CD4-positive, alpha-beta T cell (primary cell): ENCODE measurements at regions of chr7 and their contacts with region 1.

Region 1: GRCh38 chr7:100563809-100564400 is 9.8 kb downstream of the SAP25 start:
- DNase-seq: peak; percentile 75 to 92 (median 84)
- ATAC-seq: peak; percentile 76
- H3K4me3 ChIP-seq: no peak overlapping the region
- H3K4me3 Mint-ChIP-seq: no peak overlapping the region
- H3K27ac ChIP-seq: no peak overlapping the region
- H3K27ac Mint-ChIP-seq: no peak overlapping the region
- H3K4me1 ChIP-seq: peaks cover 35% of the 10 kb centered on the region
- H3K4me1 Mint-ChIP-seq: peaks cover 34% of the 10 kb centered on the region
- H3K27me3 ChIP-seq: no peaks in the 10 kb centered on the region
- H3K27me3 Mint-ChIP-seq: no peaks in the 10 kb centered on the region
- CTCF ChIP-seq: peak; percentile 92

Region 2: DNA sequence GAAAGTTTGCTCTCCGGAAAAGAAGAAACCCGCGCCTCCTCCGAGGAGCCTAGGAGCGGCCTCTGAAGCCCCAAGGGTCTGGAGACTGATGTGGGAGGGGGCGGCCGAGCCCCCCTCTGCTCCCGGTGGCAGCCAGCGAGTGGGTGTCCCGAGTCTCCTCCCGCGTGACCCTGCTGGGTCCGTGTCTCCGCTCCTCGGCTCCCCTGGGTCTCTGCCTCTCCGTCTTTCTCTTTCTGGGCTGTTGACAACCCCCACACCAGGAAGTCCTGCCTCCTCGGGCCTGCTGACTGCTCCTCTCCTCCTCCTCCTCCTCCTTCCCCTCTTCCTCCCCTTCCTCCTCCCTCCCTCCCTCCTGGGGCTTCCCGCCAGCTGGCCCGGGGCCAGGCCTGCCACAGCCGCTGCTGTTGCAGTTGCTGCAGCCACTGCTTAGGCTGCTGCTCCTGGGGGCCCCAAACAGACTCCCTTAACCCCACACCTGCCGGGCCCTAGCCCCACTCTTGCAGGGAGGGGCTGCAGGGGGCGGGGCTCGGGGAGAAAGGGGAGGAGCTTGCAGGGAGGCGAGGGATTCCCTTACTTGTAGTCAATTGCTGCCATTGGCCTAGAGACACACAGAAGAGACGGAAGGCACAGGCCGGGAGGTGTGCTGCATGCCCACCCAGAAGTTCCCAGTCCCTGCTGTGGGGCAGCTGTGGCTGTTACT is 84.8 kb before region 1 on chr7 and contains the start of gene TSC22D4:
- CTCF ChIA-PET with region 1: interaction called, 14 read pairs
- POLR2A ChIA-PET with region 1: interaction called, 8 read pairs
- intact Hi-C with region 1: loop called in 1 of 2 experiments (anchors 1 kb)
- DNase-seq: peak; percentile 85 to 97 (median 93)
- ATAC-seq: peak; percentile 75
- H3K4me3 ChIP-seq: peak within 1 kb of the TSS; percentile 100
- H3K4me3 Mint-ChIP-seq: peak within 1 kb of the TSS; percentile 97
- H3K27ac ChIP-seq: peak within 1 kb of the TSS; percentile 73 to 84
- H3K27ac Mint-ChIP-seq: peak within 1 kb of the TSS; percentile 83
- H3K4me1 ChIP-seq: peaks cover 70% of the 10 kb centered on the region
- H3K4me1 Mint-ChIP-seq: peaks cover 49% of the 10 kb centered on the region
- H3K27me3 ChIP-seq: no peaks in the 10 kb centered on the region
- H3K27me3 Mint-ChIP-seq: no peaks in the 10 kb centered on the region
- CTCF ChIP-seq: no peak
- total RNA-seq, gene TSC22D4: 34.6 to 36.5 TPM

Region 3: GRCh38 chr7:100538654-100539435 is 25.1 kb before region 1 on chr7 and contains the start of gene AGFG2:
- CTCF ChIA-PET with region 1: interaction called, 48 read pairs
- POLR2A ChIA-PET with region 1: interaction called, 8 read pairs
- intact Hi-C with region 1: loop called (anchors 2 kb)
- DNase-seq: peak; percentile 100
- ATAC-seq: peak; percentile 94
- H3K4me3 ChIP-seq: peak within 1 kb of the TSS; percentile 73
- H3K4me3 Mint-ChIP-seq: peak within 1 kb of the TSS; percentile 99
- H3K27ac ChIP-seq: peak within 1 kb of the TSS in 1 of 2 donors; percentile 41
- H3K27ac Mint-ChIP-seq: peak within 1 kb of the TSS; percentile 77
- H3K4me1 ChIP-seq: peaks cover 44% of the 10 kb centered on the region
- H3K4me1 Mint-ChIP-seq: peaks cover 48% of the 10 kb centered on the region
- H3K27me3 ChIP-seq: no peaks in the 10 kb centered on the region
- H3K27me3 Mint-ChIP-seq: no peaks in the 10 kb centered on the region
- CTCF ChIP-seq: no peak
- total RNA-seq, gene AGFG2: 6.6 to 9.9 TPM

Region 4: DNA sequence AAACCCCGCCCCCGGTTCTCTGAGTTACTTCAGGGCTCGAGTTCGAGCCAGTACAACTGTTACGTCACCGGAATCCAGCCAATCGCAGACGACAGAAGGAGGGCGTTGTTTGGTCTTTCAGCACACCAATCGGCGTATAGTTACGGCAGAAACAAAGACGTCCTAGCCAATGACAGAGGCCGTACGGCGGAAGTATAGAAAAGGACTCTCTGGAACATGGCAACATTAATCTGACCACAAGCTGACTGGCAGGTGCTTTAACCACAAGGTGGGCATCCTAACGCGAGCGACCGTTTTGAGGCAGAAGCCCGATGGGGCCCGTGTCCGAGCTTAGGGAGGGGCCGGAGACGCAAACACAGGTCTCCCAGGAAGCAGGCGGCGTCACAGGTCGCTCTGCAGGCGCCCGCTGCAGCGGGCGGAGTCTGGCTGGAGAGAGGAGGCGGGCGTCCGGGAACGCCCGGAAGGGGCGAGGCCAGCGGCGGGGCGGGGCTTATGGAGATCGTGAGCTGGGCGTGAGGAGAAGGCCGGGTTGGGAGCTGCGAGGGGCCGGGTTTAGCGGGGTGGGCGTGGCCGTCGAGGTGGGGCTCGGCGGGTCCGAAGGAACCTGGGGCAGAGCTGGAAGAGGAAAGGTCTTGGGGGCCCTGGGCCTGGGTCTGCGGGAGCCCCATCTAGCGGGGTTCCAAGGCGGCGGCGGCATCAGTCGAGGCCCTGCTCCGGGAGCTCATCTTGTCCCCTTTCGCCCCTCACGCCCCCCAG is 48.2 kb after region 1 on chr7 and contains the start of gene MOSPD3:
- CTCF ChIA-PET with region 1: interaction called, 10 read pairs
- POLR2A ChIA-PET with region 1: no interaction called
- intact Hi-C with region 1: no loop called
- DNase-seq: peak; percentile 95 to 99 (median 98)
- ATAC-seq: peak; percentile 87
- H3K4me3 ChIP-seq: peak within 1 kb of the TSS; percentile 62
- H3K4me3 Mint-ChIP-seq: peak within 1 kb of the TSS; percentile 94
- H3K27ac ChIP-seq: peak within 1 kb of the TSS; percentile 78 to 92
- H3K27ac Mint-ChIP-seq: peak within 1 kb of the TSS; percentile 97
- H3K4me1 ChIP-seq: peaks cover 27% of the 10 kb centered on the region
- H3K4me1 Mint-ChIP-seq: peaks cover 31% of the 10 kb centered on the region
- H3K27me3 ChIP-seq: no peaks in the 10 kb centered on the region
- H3K27me3 Mint-ChIP-seq: no peaks in the 10 kb centered on the region
- CTCF ChIP-seq: no peak
- total RNA-seq, gene MOSPD3: 8.5 to 10.9 TPM

Region 5: DNA sequence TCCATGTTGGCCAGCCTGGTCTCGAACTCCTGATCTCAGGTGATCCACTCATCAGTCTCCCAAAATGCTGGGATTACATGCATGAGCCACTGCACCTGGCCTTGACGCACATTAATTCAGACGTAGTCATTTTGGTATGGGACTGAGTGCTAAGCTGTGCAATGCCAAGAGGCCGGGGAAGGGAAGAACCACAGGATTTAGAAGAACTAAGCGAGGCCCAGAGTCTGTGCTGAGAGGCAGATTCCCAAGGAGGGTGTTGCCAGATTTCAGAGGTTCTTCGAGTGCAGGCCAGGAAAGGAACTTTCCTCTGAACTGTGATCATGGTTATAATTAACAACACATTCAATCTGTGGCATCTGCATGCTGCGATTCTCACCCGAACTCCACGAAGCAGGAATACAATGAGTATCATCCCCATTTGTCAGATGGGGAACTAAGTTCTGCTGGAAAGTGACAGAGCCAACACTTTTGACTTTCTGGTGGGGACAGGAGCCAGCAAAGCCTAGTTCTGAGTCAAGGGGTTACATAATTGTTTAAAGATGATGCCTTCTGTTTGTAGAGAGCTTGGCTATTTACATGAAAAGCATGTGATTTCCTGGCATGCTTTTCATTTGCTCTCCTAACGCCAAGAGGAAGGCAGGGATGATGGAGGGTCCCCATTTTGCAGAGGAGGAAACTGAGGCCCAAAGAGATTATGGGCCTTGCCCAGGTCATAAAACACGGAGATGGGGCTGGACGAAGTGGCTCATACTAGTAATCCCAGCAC is 163.3 kb after region 1 on chr7:
- CTCF ChIA-PET with region 1: interaction called, 4 read pairs
- POLR2A ChIA-PET with region 1: no interaction called
- intact Hi-C with region 1: loop called (anchors 1 kb)
- DNase-seq: no peak
- ATAC-seq: no peak
- H3K4me3 ChIP-seq: no peak overlapping the region
- H3K4me3 Mint-ChIP-seq: no peak overlapping the region
- H3K27ac ChIP-seq: no peak overlapping the region
- H3K27ac Mint-ChIP-seq: no peak overlapping the region
- H3K4me1 ChIP-seq: peaks cover 3% of the 10 kb centered on the region
- H3K4me1 Mint-ChIP-seq: peaks cover 5% of the 10 kb centered on the region
- H3K27me3 ChIP-seq: peaks cover 2 to 16% of the 10 kb centered on the region in 2 experiments
- H3K27me3 Mint-ChIP-seq: peaks cover 40% of the 10 kb centered on the region
- CTCF ChIP-seq: no peak